Naive thymus-derived CD8-positive, alpha-beta T cell (primary cell): ENCODE measurements at regions of chrX and their contacts with region 1.

Region 1: GRCh38 chrX:107716816-107717700 is 58.5 kb downstream of the TSC22D3 start:
- DNase-seq: peak; percentile 71 to 96 (median 92)
- ATAC-seq: peak; percentile 55 to 59
- H3K4me3 Mint-ChIP-seq: peak overlapping the region; percentile 84 to 97 (median 92)
- H3K27ac Mint-ChIP-seq: peak overlapping the region; percentile 96 to 100 (median 100)
- H3K4me1 Mint-ChIP-seq: peaks cover 23 to 65% (median 58%) of the 10 kb centered on the region in 4 donors
- H3K27me3 Mint-ChIP-seq: no peaks in the 10 kb centered on the region

Region 2: DNA sequence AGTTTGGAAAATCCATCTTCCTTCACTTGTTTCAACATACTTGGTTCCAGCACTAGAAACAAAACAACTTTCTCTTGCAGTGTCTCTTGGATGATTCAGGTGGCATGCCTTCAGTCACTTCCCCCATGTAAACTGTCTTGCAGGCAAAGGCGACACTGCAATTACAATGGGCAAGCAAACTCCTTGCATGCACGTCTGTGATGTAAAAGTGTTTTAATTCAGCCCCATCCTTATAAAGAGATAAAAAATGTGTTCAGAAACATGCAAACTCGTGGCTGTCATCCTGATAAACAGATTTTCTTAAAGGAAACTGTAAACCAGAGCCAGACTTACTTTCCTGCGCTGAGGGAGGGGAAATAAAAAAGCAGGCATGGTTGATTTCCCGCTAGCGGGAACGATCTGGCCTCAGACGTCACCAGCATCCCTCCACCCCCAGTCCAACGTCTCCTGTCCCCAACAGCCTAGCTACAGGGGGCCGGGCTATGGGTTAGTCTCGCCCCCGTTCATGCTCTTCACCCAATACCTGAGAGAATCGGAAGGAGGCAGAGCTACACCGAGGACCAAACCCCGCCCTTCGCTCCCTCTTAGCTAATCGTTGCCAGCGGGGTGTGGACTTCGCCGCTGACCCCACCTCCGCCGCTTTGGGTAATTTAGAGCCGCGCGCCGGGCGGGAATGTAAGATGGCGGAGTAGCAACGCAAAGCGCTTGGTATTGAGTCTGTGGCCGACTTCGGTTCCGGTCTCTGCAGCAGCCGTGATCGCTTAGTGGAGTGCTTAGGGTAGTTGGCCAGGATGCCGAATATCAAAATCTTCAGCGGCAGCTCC is 89.0 kb before region 1 on chrX and contains the start of gene PRPS1:
- POLR2A ChIA-PET with region 1: interaction called, 13 read pairs
- DNase-seq: peak; percentile 69 to 94 (median 86)
- ATAC-seq: peak; percentile 95 to 96
- H3K4me3 Mint-ChIP-seq: peak within 1 kb of the TSS; percentile 87 to 97 (median 94)
- H3K27ac Mint-ChIP-seq: peak within 1 kb of the TSS; percentile 87 to 97 (median 94)
- H3K4me1 Mint-ChIP-seq: peaks cover 8 to 41% (median 30%) of the 10 kb centered on the region in 4 donors
- H3K27me3 Mint-ChIP-seq: no peaks in the 10 kb centered on the region
- polyA plus RNA-seq, gene PRPS1: 53.8 to 61.6 (median 56.7) TPM

Region 3: GRCh38 chrX:107672955-107673378 is 44.1 kb before region 1 on chrX:
- POLR2A ChIA-PET with region 1: interaction called, 851 read pairs
- DNase-seq: peak; percentile 52 to 94 (median 86)
- ATAC-seq: peak; percentile 28 to 51
- H3K4me3 Mint-ChIP-seq: peak overlapping the region; percentile 70 to 94 (median 84)
- H3K27ac Mint-ChIP-seq: peak overlapping the region; percentile 91 to 100 (median 98)
- H3K4me1 Mint-ChIP-seq: peaks cover 17 to 60% (median 52%) of the 10 kb centered on the region in 4 donors
- H3K27me3 Mint-ChIP-seq: peaks cover 0 to 2% (median 0%) of the 10 kb centered on the region in 5 donors

Region 4: DNA sequence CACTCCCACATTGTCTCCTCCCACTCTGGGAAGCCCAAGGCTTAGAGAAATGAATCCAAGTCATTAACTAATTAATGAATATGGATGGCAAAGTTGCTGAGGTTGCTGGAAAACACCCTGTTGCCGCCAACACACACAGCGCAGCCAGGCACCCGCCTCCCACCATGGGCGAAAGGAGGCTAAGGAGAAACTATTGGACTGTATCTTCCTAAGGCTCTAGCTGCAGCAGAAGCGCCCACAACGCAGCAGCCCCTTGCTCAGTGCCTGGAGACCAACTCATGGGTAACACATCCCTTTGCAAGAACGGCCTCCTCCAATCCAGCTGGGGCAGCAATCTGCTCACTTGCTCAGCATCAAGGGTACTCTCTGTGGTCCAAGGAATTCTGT is 24.3 kb after region 1 on chrX:
- POLR2A ChIA-PET with region 1: interaction called, 90 read pairs
- DNase-seq: no peak
- ATAC-seq: peak; percentile 13 to 23
- H3K4me3 Mint-ChIP-seq: peak overlapping the region; percentile 75 to 93 (median 84)
- H3K27ac Mint-ChIP-seq: peak overlapping the region; percentile 96 to 100 (median 98)
- H3K4me1 Mint-ChIP-seq: peaks cover 20 to 55% (median 45%) of the 10 kb centered on the region in 4 donors
- H3K27me3 Mint-ChIP-seq: peaks cover 0 to 4% (median 0%) of the 10 kb centered on the region in 5 donors

Region 5: DNA sequence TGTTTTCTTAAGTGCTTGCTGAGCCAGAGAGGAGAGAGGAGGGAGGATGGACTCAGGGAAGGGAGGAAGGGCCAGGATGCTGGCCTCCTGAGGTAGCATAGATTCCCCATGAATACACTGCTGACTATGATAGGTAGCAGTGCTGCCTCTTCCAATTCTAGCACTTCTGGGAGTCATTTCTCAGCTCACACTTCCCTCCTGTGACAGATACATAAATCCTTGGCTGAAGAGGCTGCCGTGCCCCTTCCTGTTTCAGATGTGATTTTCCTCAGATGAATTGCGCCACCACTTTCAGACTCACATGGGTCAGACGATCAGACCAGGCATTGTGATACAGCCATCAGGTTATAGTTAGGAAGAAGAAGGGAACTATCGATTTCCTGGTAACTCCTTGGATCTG is 36.1 kb after region 1 on chrX:
- POLR2A ChIA-PET with region 1: no interaction called
- DNase-seq: no peak
- ATAC-seq: no peak
- H3K4me3 Mint-ChIP-seq: no peak overlapping the region
- H3K27ac Mint-ChIP-seq: peak overlapping the region in 3 of 10 donors; percentile 4 to 71 (median 51)
- H3K4me1 Mint-ChIP-seq: peaks cover 7 to 33% (median 18%) of the 10 kb centered on the region in 4 donors
- H3K27me3 Mint-ChIP-seq: no peaks in the 10 kb centered on the region

Region 6: DNA sequence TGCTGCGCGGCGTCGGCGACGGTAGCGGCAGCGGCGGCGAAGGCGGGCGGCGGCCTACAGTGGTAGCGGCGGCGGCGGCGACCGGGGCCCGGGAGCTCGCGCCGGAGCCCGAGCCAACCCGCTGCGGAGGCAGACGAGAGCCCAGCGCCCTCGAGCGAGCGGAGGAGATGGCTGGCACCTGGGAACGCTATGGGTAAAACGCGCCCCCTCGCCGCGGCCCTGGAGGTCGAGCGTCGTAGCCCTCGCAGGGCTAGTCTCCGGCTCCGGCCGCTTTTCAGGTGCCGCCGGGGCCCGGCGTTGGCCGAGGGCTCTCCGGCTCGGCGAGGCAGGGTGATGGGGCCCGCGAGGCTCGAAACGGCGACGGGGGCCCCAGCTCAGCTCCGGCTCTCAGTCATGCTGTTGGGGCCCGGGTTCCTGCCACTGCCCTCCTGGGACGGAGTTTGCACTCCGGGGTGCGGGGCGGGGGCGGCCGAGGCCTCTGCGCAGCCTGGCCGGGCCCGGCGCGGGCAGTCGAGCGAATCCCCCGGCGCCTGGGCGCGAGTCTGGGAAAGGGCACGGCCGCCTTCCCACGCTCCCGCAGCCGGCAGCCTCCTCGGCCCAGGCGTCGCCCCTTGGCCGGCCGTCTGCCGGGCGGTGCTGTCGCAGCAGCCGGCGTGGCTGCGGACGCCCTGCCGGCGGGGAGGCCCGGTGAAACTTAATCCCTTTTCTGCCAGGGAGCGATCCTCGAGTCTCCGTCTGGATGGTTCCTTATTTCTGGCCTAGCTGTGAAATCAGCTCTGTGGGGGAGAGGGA is 109.4 kb after region 1 on chrX:
- POLR2A ChIA-PET with region 1: interaction called, 18 read pairs
- DNase-seq: peak in 8 of 10 donors; percentile 16 to 67 (median 38)
- ATAC-seq: peak; percentile 69 to 82
- H3K4me3 Mint-ChIP-seq: peak overlapping the region; percentile 79 to 93 (median 90)
- H3K27ac Mint-ChIP-seq: peak overlapping the region; percentile 58 to 95 (median 87)
- H3K4me1 Mint-ChIP-seq: peaks cover 16 to 55% (median 48%) of the 10 kb centered on the region in 4 donors
- H3K27me3 Mint-ChIP-seq: peaks cover 0 to 4% (median 0%) of the 10 kb centered on the region in 5 donors